Naive thymus-derived CD4-positive, alpha-beta T cell (primary cell): ENCODE measurements at regions of chr22 and their contacts with region 1.

Region 1: GRCh38 chr22:23716811-23717801 is 26.3 kb downstream of the RGL4 start:
- DNase-seq: peak; percentile 72 to 85 (median 81)
- ATAC-seq: peak; percentile 97
- H3K4me3 ChIP-seq: peak overlapping the region; percentile 71
- H3K4me3 Mint-ChIP-seq: peak overlapping the region; percentile 78 to 88 (median 81)
- H3K27ac ChIP-seq: peak overlapping the region; percentile 89
- H3K27ac Mint-ChIP-seq: peak overlapping the region; percentile 8 to 93 (median 86)
- H3K4me1 ChIP-seq: peaks cover 10 to 12% of the 10 kb centered on the region in 2 donors
- H3K4me1 Mint-ChIP-seq: peaks cover 12 to 24% (median 16%) of the 10 kb centered on the region in 7 donors
- H3K27me3 ChIP-seq: no peaks in the 10 kb centered on the region
- H3K27me3 Mint-ChIP-seq: no peaks in the 10 kb centered on the region

Region 2: DNA sequence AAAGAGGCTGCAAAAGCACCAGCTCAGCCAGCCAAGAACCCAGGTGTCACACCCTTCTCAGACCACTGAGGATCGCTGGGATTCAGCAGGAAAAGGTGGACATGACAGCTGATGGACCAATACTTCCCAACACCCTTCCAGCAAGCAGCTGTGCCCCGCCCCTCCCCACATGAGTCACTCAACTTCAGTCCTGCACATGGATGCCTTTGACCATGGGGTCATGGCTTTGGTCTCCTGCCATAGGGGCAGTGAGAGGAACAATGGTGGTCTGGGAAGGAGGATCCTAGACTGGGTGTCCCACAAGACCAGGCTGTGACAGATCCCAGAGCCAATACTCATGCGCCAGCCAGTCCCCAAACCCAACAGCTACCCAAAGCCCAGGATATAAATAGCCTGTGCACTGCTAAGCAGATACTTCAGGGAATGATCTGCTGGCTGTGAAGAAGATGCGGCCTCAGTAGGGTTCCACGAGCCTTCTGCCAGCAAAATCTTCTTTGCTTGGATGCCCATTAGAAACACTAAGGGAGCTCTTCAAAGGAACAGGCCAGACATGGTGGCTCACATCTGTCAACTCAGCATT is 31.8 kb before region 1 on chr22:
- CTCF ChIA-PET with region 1: no interaction called
- POLR2A ChIA-PET with region 1: no interaction called
- intact Hi-C with region 1: no loop called
- DNase-seq: no peak
- ATAC-seq: no peak
- H3K4me3 ChIP-seq: no peak overlapping the region
- H3K4me3 Mint-ChIP-seq: no peak overlapping the region
- H3K27ac ChIP-seq: no peak overlapping the region
- H3K27ac Mint-ChIP-seq: peak overlapping the region in 2 of 9 donors; percentile 32 to 59
- H3K4me1 ChIP-seq: no peaks in the 10 kb centered on the region
- H3K4me1 Mint-ChIP-seq: peaks cover 0 to 13% (median 6%) of the 10 kb centered on the region in 7 donors
- H3K27me3 ChIP-seq: no peaks in the 10 kb centered on the region
- H3K27me3 Mint-ChIP-seq: no peaks in the 10 kb centered on the region

Region 3: DNA sequence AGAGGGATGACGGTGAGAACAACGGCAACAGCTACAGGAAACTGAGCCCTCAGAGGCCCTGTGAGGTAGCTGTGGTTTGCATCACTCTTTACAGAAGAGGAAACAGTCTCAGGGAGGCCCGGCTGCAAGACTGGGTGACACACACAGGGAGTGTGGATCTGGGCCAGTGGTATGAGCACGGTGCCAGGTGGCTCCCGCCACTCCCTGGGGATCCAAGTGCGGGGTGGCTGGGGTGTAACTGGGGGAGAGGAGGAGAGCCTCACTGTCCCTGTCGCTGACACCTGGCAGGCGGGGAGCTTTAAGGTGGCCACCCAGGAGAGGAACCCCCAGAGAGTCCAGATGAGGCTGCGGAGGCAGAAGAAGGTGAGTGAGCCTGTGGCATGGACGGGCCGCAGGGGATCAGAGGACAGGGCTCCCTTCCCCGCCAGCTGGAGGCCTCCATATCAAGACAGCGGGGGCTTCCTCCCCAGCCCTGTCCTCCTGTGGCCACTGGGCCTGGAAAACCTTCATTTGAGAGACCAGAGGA is 20.7 kb before region 1 on chr22:
- CTCF ChIA-PET with region 1: no interaction called
- POLR2A ChIA-PET with region 1: interaction called, 39 read pairs
- intact Hi-C with region 1: loop called (anchors 1 kb)
- DNase-seq: peak; percentile 60 to 91 (median 86)
- ATAC-seq: peak; percentile 99
- H3K4me3 ChIP-seq: peak overlapping the region; percentile 71
- H3K4me3 Mint-ChIP-seq: peak overlapping the region; percentile 94 to 100 (median 98)
- H3K27ac ChIP-seq: peak overlapping the region; percentile 99
- H3K27ac Mint-ChIP-seq: peak overlapping the region; percentile 99 to 100 (median 100)
- H3K4me1 ChIP-seq: peaks cover 28 to 38% of the 10 kb centered on the region in 2 donors
- H3K4me1 Mint-ChIP-seq: peaks cover 37 to 64% (median 51%) of the 10 kb centered on the region in 7 donors
- H3K27me3 ChIP-seq: no peaks in the 10 kb centered on the region
- H3K27me3 Mint-ChIP-seq: no peaks in the 10 kb centered on the region

Region 4: DNA sequence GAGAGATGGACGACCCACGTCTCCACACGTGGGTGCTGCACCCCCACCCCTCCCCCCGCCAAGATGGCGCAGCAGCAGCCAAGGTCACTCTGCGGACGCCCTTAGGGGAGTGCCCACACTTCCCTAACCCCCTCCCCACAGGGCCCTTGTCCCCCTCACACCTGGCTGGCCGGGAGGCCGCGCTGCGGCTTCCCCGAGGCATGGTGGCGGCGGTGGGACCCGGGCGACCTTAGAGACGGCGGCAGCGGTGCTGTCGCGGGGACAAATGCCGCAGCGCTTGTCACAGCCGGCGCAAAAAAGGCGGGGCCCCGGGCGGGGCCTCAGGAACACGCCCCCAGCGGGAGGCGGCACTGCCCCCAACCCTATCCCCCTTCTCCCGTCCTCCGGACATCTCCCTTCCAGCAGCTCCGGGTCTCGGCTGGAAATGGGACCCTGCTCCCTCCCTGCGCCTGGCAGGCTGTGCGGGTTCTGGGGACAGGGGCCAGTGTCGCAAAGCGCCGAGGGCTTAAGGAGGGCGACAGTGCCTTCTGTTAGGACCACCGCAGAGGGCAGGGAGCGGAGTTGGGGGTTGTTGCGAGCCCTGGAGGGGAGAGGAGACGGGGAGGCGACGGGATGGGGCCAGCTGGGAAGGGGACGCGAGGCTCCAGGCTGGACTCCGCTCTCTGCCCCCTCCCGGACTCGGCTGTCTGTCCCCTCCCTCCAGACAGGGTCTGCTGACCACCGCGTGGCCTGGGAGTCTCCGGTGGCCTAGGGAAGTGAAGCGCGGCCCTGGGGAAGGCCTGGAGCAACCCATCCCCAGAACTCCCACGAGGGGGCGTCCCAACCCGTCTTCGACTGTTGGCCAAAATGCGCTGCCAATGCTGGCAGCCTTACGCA is 50.8 kb after region 1 on chr22 and contains the start of gene CHCHD10:
- CTCF ChIA-PET with region 1: no interaction called
- POLR2A ChIA-PET with region 1: interaction called, 7 read pairs
- intact Hi-C with region 1: loop called in 1 of 2 experiments (anchors 1 kb)
- DNase-seq: peak; percentile 63 to 84 (median 75)
- ATAC-seq: peak; percentile 80
- H3K4me3 ChIP-seq: peak within 1 kb of the TSS; percentile 92
- H3K4me3 Mint-ChIP-seq: peak within 1 kb of the TSS; percentile 63 to 88 (median 83)
- H3K27ac ChIP-seq: peak within 1 kb of the TSS; percentile 85
- H3K27ac Mint-ChIP-seq: peak within 1 kb of the TSS in 8 of 9 donors; percentile 42 to 82 (median 64)
- H3K4me1 ChIP-seq: peaks cover 27 to 37% of the 10 kb centered on the region in 2 donors
- H3K4me1 Mint-ChIP-seq: peaks cover 3 to 52% (median 38%) of the 10 kb centered on the region in 7 donors
- H3K27me3 ChIP-seq: no peaks in the 10 kb centered on the region
- H3K27me3 Mint-ChIP-seq: peaks cover 0 to 4% (median 0%) of the 10 kb centered on the region in 5 donors
- total RNA-seq, gene CHCHD10: 38.2 to 56.1 (median 46.4) TPM

Region 5: DNA sequence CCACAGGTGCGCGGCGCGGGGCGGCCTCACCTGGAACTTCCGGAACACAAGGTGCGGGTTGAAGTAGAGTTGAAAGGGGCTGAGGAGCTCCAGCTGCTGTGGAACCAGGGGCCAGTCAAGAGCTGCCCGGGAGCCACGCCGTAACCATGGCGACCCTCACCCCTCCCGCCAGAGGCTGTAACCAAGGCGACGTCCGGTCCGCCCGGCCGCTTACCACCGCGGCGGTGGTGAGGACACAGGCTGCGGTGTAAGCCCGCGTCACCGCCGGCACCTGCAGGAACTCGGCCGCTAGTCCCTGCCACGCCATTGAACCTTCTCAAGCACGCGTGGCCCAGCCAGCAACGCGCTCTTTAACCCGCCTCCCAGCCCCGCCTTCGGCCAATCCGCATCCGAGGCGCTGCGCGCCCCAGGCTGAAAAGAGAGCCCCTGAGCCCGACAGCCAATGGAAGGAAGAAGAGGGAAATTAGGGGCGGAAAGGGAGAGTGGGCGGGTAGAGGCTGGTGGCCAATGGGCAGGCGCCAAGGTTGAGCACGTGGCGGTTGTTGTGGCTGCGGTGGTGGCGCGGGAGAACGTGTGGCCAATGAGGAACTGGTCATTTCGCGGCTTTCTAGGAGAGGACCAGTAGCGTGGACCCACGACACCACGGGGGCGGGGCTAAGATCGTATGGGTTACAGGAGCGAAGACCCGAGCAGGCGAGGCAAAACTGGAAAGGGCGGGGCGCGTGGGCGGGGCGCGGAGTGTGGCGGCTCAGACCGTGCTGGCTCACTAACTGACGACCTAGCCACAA is 121.8 kb after region 1 on chr22 and contains the start of gene DERL3:
- CTCF ChIA-PET with region 1: no interaction called
- POLR2A ChIA-PET with region 1: no interaction called
- intact Hi-C with region 1: loop called in 1 of 2 experiments (anchors 1 kb)
- DNase-seq: peak; percentile 80 to 97 (median 92)
- ATAC-seq: peak; percentile 94
- H3K4me3 ChIP-seq: peak within 1 kb of the TSS; percentile 70
- H3K4me3 Mint-ChIP-seq: peak within 1 kb of the TSS; percentile 81 to 96 (median 93)
- H3K27ac ChIP-seq: peak within 1 kb of the TSS; percentile 51
- H3K27ac Mint-ChIP-seq: peak within 1 kb of the TSS; percentile 43 to 97 (median 87)
- H3K4me1 ChIP-seq: peaks cover 4 to 5% of the 10 kb centered on the region in 2 donors
- H3K4me1 Mint-ChIP-seq: peaks cover 12 to 26% (median 20%) of the 10 kb centered on the region in 7 donors
- H3K27me3 ChIP-seq: no peaks in the 10 kb centered on the region
- H3K27me3 Mint-ChIP-seq: peaks cover 0 to 7% (median 0%) of the 10 kb centered on the region in 5 donors
- total RNA-seq, gene DERL3: 1.6 to 16.2 (median 6.5) TPM

Region 6: DNA sequence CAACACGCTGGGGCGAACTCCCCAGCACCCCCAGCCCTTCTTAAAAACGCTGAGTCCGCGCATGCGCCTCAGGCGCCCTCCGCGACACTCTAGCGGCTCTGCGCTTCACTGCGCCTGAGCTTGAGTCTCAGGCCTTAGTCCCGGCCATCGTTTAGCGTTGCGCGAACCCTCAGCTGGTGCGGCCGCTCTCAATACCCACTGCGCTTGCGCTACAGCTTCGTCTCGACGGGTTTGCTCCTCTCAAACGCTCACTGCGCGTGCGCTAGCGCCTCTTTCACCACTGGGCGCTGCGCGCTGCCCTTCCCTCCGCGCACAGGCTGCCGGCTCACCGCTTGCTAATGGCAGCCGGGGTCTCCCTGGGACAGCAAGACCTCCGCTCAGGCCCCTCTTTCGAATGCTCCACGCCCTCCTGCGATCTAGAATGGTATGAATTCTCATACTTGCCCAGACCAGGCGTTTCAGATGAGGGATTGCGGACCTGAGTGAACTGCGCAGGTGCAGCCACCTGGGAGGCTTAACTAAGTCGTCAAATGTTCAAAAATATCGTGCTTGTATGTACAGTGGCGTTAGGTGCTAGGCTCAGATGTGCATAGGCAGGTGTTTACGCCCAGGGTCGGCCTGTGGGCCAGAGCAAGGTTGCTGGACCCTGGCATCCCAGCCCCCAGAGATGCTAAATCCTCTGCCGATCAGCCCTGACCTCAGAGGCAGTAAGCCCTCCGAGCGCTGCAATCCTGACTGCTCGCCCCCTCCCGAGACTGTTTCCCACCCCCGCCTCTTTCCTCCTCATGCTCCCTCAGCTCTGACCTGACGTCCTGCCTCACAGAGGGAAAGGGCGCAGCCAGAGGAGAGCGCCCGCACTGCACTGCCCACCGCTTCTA is 140.7 kb after region 1 on chr22 and contains the start of gene SLC2A11:
- CTCF ChIA-PET with region 1: no interaction called
- POLR2A ChIA-PET with region 1: no interaction called
- intact Hi-C with region 1: loop called in 1 of 2 experiments (anchors 5 kb)
- DNase-seq: peak; percentile 84 to 91 (median 88)
- ATAC-seq: peak; percentile 97
- H3K4me3 ChIP-seq: peak within 1 kb of the TSS; percentile 99
- H3K4me3 Mint-ChIP-seq: peak within 1 kb of the TSS; percentile 87 to 99 (median 95)
- H3K27ac ChIP-seq: peak within 1 kb of the TSS; percentile 66
- H3K27ac Mint-ChIP-seq: peak within 1 kb of the TSS; percentile 86 to 97 (median 89)
- H3K4me1 ChIP-seq: peaks cover 5 to 7% of the 10 kb centered on the region in 2 donors
- H3K4me1 Mint-ChIP-seq: peaks cover 10 to 29% (median 22%) of the 10 kb centered on the region in 7 donors
- H3K27me3 ChIP-seq: no peaks in the 10 kb centered on the region
- H3K27me3 Mint-ChIP-seq: peaks cover 0 to 11% (median 0%) of the 10 kb centered on the region in 5 donors
- total RNA-seq, gene SLC2A11: 10.5 to 29.7 (median 14.7) TPM

Region 7: GRCh38 chr22:23913661-23914353 is 196.7 kb after region 1 on chr22:
- CTCF ChIA-PET with region 1: no interaction called
- POLR2A ChIA-PET with region 1: no interaction called
- intact Hi-C with region 1: loop called in 1 of 2 experiments (anchors 5 kb)
- DNase-seq: peak; percentile 94 to 100 (median 97)
- ATAC-seq: peak; percentile 100
- H3K4me3 ChIP-seq: peak overlapping the region; percentile 83
- H3K4me3 Mint-ChIP-seq: peak overlapping the region; percentile 84 to 97 (median 93)
- H3K27ac ChIP-seq: peak overlapping the region; percentile 78
- H3K27ac Mint-ChIP-seq: peak overlapping the region; percentile 89 to 99 (median 98)
- H3K4me1 ChIP-seq: peaks cover 0 to 7% of the 10 kb centered on the region in 2 donors
- H3K4me1 Mint-ChIP-seq: peaks cover 7 to 34% (median 16%) of the 10 kb centered on the region in 7 donors
- H3K27me3 ChIP-seq: no peaks in the 10 kb centered on the region
- H3K27me3 Mint-ChIP-seq: peaks cover 0 to under 1% (median 0%) of the 10 kb centered on the region in 5 donors